ENCODE measurements at regions of chr12 and their contacts with region 1.

Region 1: GRCh38 chr12:128387811-128388422 is 120.9 kb downstream of the TMEM132C start:
- DNase-seq: peak; percentile 27 to 33
- ATAC-seq: peak in 1 of 3 donors; percentile 49
- H3K4me3 ChIP-seq: no peak overlapping the region
- H3K4me3 Mint-ChIP-seq: no peak overlapping the region
- H3K27ac ChIP-seq: peak overlapping the region; percentile 99
- H3K27ac Mint-ChIP-seq: peak overlapping the region; percentile 97 to 99
- H3K4me1 ChIP-seq: peaks cover 23% of the 10 kb centered on the region
- H3K4me1 Mint-ChIP-seq: peaks cover 18 to 25% of the 10 kb centered on the region in 2 donors
- H3K27me3 ChIP-seq: no peaks in the 10 kb centered on the region
- H3K27me3 Mint-ChIP-seq: peaks cover 15 to 18% of the 10 kb centered on the region in 2 donors
- CTCF ChIP-seq: peak; percentile 65

Region 2: DNA sequence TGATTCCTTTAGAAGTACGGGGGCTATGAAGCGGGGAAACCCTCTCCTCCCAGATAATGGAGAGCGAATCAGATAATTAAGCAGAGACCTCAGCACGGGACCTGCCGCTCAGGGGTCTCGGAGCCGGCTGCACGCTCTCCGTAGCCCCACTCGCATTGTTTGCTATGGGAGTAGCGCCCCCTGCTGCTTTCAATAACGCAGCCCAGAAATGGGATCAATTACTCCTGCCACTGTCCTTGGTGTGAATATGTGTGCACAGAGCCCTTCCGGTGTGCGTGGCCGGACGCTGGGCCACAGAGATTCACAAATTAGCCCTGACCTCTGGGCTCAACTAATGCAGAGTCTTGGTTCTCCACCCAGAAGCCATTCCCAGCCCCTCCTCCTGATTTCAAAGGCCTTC is 197.3 kb before region 1 on chr12:
- intact Hi-C with region 1: no loop called
- DNase-seq: no peak
- ATAC-seq: no peak
- H3K4me3 ChIP-seq: no peak overlapping the region
- H3K4me3 Mint-ChIP-seq: no peak overlapping the region
- H3K27ac ChIP-seq: no peak overlapping the region
- H3K27ac Mint-ChIP-seq: no peak overlapping the region
- H3K4me1 ChIP-seq: no peaks in the 10 kb centered on the region
- H3K4me1 Mint-ChIP-seq: no peaks in the 10 kb centered on the region
- H3K27me3 ChIP-seq: no peaks in the 10 kb centered on the region
- H3K27me3 Mint-ChIP-seq: no peaks in the 10 kb centered on the region
- CTCF ChIP-seq: no peak

Region 3: GRCh38 chr12:128476266-128476665 is 88.3 kb after region 1 on chr12:
- intact Hi-C with region 1: no loop called
- DNase-seq: no peak
- ATAC-seq: no peak
- H3K4me3 ChIP-seq: no peak overlapping the region
- H3K4me3 Mint-ChIP-seq: no peak overlapping the region
- H3K27ac ChIP-seq: no peak overlapping the region
- H3K27ac Mint-ChIP-seq: no peak overlapping the region
- H3K4me1 ChIP-seq: no peaks in the 10 kb centered on the region
- H3K4me1 Mint-ChIP-seq: no peaks in the 10 kb centered on the region
- H3K27me3 ChIP-seq: no peaks in the 10 kb centered on the region
- H3K27me3 Mint-ChIP-seq: peaks cover 6 to 17% of the 10 kb centered on the region in 2 donors
- CTCF ChIP-seq: no peak

Region 4: DNA sequence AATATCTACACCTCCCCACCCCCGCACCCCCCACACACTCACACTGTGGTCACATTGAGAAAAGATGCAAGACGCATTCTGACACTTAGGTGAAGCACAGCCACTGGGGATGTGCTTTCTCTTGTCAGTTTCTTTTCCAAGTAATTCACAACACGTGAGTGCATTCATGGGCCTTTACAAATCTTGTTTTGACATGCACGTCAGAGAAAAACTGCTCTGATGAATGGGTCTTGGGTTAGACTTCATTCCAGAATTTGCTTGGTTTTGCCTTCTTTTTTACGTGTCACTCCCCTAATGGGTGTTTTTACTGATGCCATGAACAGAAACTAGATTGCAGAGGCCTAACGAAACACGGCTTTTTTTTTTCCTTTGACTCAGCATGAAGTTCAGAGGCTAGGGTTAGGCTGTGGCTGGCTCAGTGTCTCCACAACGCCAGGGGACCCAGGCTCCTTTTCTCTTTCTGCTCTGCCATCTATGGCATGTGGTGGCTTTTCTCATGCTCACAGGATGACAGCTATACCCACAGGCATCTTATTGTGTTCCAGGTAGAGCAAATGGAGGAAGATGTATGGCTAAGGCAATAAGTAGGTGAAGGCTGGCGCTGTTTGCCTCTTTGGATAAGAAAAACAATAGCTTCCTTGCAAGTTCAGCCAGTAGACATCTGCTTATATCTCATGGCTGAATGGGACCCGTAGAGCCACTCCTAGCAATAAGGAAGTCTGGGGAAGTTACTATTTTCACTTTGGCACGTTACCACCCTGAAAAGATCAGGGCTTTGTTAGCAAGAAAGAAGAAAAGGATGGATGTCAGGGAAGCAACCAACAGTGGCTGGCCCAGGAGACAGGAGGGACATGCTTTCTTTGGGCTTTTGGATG is 182.5 kb after region 1 on chr12:
- intact Hi-C with region 1: loop called (anchors 2 kb)
- DNase-seq: peak; percentile 22 to 42
- ATAC-seq: peak; percentile 85 to 92 (median 89)
- H3K4me3 ChIP-seq: no peak overlapping the region
- H3K4me3 Mint-ChIP-seq: peak overlapping the region; percentile 69
- H3K27ac ChIP-seq: peak overlapping the region; percentile 51
- H3K27ac Mint-ChIP-seq: peak overlapping the region; percentile 75 to 83
- H3K4me1 ChIP-seq: peaks cover 6% of the 10 kb centered on the region
- H3K4me1 Mint-ChIP-seq: peaks cover 15 to 25% of the 10 kb centered on the region in 2 donors
- H3K27me3 ChIP-seq: no peaks in the 10 kb centered on the region
- H3K27me3 Mint-ChIP-seq: peaks cover 4 to 9% of the 10 kb centered on the region in 2 donors
- CTCF ChIP-seq: no peak

Measured in natural killer cell (primary cell).